CD8-positive, alpha-beta T cell (primary cell): ENCODE measurements at regions of chr1 and their contacts with region 1.

Region 1: DNA sequence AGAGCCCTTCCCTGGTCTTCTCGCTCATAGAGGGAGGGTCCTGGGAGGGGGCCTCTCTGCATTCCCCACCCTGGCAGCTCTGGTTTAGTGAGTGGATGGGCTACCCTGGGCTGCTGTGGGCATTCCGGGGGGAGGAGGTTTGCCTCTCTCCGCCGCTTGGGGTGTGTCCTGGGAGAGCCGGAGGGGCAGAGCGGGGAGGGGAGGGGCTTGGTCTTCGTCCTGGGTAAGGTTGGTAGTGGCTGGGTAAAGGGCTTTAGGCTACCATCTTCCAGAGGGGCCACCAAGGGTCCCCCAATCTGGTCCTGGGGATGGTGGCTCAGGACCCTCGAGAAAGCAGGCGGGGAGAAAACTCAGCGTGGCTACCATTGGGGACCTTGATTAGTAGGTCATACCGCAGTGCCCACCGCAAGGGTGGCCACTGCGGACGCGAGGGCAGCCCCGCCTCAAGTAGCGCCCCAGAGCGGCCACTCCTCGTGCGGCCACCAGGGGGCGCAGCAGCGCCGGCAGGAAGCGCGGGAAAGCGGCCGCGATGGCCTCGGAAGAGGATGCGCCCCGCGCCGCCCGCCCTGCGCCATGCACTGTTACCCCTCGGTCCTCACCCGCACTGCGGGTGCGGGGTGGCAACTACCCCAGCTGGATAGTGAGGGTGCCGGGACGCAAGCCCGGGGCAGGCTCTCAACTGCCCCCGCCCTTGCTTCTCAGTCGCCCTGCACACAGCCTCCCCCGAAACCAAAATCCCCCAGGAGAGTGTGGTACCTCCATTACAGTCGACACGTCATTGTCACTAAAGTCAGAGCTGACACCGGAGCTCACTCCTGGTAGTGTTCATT is 44.1 kb upstream of the SLC25A33 start:
- DNase-seq: peak; percentile 33 to 82 (median 65)
- ATAC-seq: peak; percentile 83
- H3K4me3 ChIP-seq: peak overlapping the region; percentile 39 to 43
- H3K4me3 Mint-ChIP-seq: peak overlapping the region; percentile 67
- H3K27ac ChIP-seq: no peak overlapping the region
- H3K27ac Mint-ChIP-seq: no peak overlapping the region
- H3K4me1 ChIP-seq: peaks cover 8% of the 10 kb centered on the region
- H3K4me1 Mint-ChIP-seq: peaks cover 5% of the 10 kb centered on the region
- H3K27me3 ChIP-seq: no peaks in the 10 kb centered on the region
- H3K27me3 Mint-ChIP-seq: peaks cover 10% of the 10 kb centered on the region
- CTCF ChIP-seq: peak; percentile 93

Region 2: DNA sequence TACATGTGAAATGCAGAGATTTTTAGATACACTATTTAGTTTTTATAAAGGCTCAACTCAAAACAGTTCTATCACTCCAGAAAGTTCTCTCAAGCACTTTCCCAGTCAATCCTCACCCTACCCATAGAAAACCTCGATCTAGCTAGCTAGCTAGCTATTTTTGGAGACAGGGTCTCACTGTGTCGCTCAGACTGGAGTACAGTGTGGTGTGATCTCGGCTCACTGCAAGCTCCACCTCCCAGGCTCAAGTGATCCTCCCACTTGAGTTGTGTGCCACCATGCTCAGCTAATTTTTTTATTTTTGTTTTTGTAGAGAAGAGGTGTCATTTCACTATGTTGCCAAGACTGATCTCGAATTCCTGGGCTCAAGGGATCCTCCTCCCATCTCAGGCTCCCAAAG is 914.6 kb before region 1 on chr1:
- CTCF ChIA-PET with region 1: no interaction called
- POLR2A ChIA-PET with region 1: no interaction called
- intact Hi-C with region 1: no loop called
- DNase-seq: no peak
- ATAC-seq: no peak
- H3K4me3 ChIP-seq: no peak overlapping the region
- H3K4me3 Mint-ChIP-seq: no peak overlapping the region
- H3K27ac ChIP-seq: no peak overlapping the region
- H3K27ac Mint-ChIP-seq: no peak overlapping the region
- H3K4me1 ChIP-seq: no peaks in the 10 kb centered on the region
- H3K4me1 Mint-ChIP-seq: no peaks in the 10 kb centered on the region
- H3K27me3 ChIP-seq: no peaks in the 10 kb centered on the region
- H3K27me3 Mint-ChIP-seq: no peaks in the 10 kb centered on the region
- CTCF ChIP-seq: no peak

Region 3: GRCh38 chr1:9181176-9181906 is 313.8 kb before region 1 on chr1:
- CTCF ChIA-PET with region 1: interaction called, 6 read pairs
- POLR2A ChIA-PET with region 1: no interaction called
- intact Hi-C with region 1: loop called (anchors 1 kb)
- DNase-seq: peak; percentile 40 to 79 (median 64)
- ATAC-seq: peak; percentile 72
- H3K4me3 ChIP-seq: peak overlapping the region in 1 of 2 experiments; percentile 39
- H3K4me3 Mint-ChIP-seq: peak overlapping the region; percentile 69
- H3K27ac ChIP-seq: no peak overlapping the region
- H3K27ac Mint-ChIP-seq: no peak overlapping the region
- H3K4me1 ChIP-seq: peaks cover 9% of the 10 kb centered on the region
- H3K4me1 Mint-ChIP-seq: peaks cover 9% of the 10 kb centered on the region
- H3K27me3 ChIP-seq: peaks cover 0 to 5% of the 10 kb centered on the region in 2 experiments
- H3K27me3 Mint-ChIP-seq: peaks cover 38% of the 10 kb centered on the region
- CTCF ChIP-seq: peak; percentile 91

Region 4: DNA sequence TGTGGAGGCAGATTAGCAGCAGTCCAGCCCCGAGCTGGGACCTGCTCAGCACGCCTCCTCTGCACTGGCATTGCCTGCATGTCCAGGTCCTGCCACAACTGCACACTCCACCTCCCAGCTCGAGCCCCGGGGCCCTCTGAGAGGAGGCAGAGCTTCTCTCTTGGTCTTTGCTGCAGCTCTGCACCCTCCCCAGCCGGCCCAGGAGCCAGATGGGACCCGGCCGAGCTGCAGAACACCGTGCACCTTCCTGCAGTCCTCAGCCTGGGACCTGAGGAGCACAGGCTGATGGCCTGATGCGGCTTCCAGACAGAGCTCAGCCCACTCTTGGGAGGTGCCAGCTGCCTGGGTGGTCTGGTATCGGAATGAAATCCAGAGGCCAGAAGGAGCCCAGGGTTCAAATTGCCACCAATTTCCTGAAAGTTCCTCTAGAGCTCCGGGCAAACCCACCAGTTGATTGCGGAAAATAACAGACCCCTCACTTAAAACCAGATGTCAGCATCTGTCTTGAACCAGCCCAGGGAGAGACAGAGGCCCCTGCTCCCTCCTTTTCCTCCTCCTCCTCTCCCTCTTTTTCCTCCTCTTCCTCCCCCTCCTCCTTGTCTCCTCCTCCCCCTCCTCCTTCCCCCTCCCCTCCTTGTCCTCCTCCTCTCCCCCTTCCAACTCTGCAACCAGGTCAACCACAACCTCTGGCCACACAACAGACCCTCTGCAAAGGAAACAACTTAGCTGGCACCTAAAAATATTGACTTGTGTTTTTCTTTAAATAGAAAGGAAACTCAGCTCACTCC is 213.0 kb before region 1 on chr1:
- CTCF ChIA-PET with region 1: interaction called, 19 read pairs
- POLR2A ChIA-PET with region 1: interaction called, 3 read pairs
- intact Hi-C with region 1: no loop called
- DNase-seq: no peak
- ATAC-seq: no peak
- H3K4me3 ChIP-seq: no peak overlapping the region
- H3K4me3 Mint-ChIP-seq: no peak overlapping the region
- H3K27ac ChIP-seq: no peak overlapping the region
- H3K27ac Mint-ChIP-seq: no peak overlapping the region
- H3K4me1 ChIP-seq: peaks cover 34% of the 10 kb centered on the region
- H3K4me1 Mint-ChIP-seq: peaks cover 45% of the 10 kb centered on the region
- H3K27me3 ChIP-seq: no peaks in the 10 kb centered on the region
- H3K27me3 Mint-ChIP-seq: no peaks in the 10 kb centered on the region
- CTCF ChIP-seq: no peak

Region 5: DNA sequence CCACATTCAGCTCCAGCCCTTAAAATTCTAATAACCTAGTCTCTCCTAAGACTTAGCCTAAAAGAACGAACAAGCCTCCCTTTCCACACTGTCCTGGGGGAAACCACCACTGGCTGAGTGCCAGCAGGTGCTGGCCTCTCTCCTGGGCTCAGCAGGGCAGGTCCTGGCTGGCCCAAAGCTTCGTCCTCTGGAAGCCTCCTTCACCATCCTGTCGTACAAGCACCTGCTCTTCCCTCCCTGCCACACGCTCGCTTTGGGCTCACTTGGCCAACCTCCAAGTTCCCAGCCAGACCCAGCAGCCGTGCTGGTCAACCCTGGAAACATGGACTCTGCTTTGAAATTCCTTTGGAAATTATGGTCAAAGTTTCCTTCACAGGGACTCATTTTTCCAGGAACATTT is 14.1 kb before region 1 on chr1:
- CTCF ChIA-PET with region 1: interaction called, 14 read pairs
- POLR2A ChIA-PET with region 1: no interaction called
- intact Hi-C with region 1: no loop called
- DNase-seq: no peak
- ATAC-seq: no peak
- H3K4me3 ChIP-seq: no peak overlapping the region
- H3K4me3 Mint-ChIP-seq: no peak overlapping the region
- H3K27ac ChIP-seq: no peak overlapping the region
- H3K27ac Mint-ChIP-seq: no peak overlapping the region
- H3K4me1 ChIP-seq: no peaks in the 10 kb centered on the region
- H3K4me1 Mint-ChIP-seq: no peaks in the 10 kb centered on the region
- H3K27me3 ChIP-seq: no peaks in the 10 kb centered on the region
- H3K27me3 Mint-ChIP-seq: peaks cover 9% of the 10 kb centered on the region
- CTCF ChIP-seq: no peak

Region 6: GRCh38 chr1:9558271-9558945 is 63.3 kb after region 1 on chr1:
- CTCF ChIA-PET with region 1: interaction called, 6 read pairs
- POLR2A ChIA-PET with region 1: no interaction called
- intact Hi-C with region 1: loop called in 1 of 2 experiments (anchors 5 kb)
- DNase-seq: peak in 1 of 9 experiments; percentile 38
- ATAC-seq: peak; percentile 26
- H3K4me3 ChIP-seq: no peak overlapping the region
- H3K4me3 Mint-ChIP-seq: peak overlapping the region; percentile 27
- H3K27ac ChIP-seq: peak overlapping the region in 1 of 2 experiments; percentile 13
- H3K27ac Mint-ChIP-seq: peak overlapping the region; percentile 94
- H3K4me1 ChIP-seq: peaks cover 34% of the 10 kb centered on the region
- H3K4me1 Mint-ChIP-seq: peaks cover 38% of the 10 kb centered on the region
- H3K27me3 ChIP-seq: no peaks in the 10 kb centered on the region
- H3K27me3 Mint-ChIP-seq: no peaks in the 10 kb centered on the region
- CTCF ChIP-seq: no peak

Region 7: GRCh38 chr1:9671377-9672140 is 176.4 kb after region 1 on chr1:
- CTCF ChIA-PET with region 1: no interaction called
- POLR2A ChIA-PET with region 1: no interaction called
- intact Hi-C with region 1: no loop called
- DNase-seq: peak in 1 of 9 experiments; percentile 29
- ATAC-seq: peak; percentile 76
- H3K4me3 ChIP-seq: no peak overlapping the region
- H3K4me3 Mint-ChIP-seq: no peak overlapping the region
- H3K27ac ChIP-seq: peak overlapping the region in 1 of 2 experiments; percentile 39
- H3K27ac Mint-ChIP-seq: peak overlapping the region; percentile 87
- H3K4me1 ChIP-seq: peaks cover 82% of the 10 kb centered on the region
- H3K4me1 Mint-ChIP-seq: peaks cover 71% of the 10 kb centered on the region
- H3K27me3 ChIP-seq: no peaks in the 10 kb centered on the region
- H3K27me3 Mint-ChIP-seq: no peaks in the 10 kb centered on the region
- CTCF ChIP-seq: no peak

Region 8: GRCh38 chr1:9867408-9868243 is 372.5 kb after region 1 on chr1:
- CTCF ChIA-PET with region 1: interaction called, 3 read pairs
- POLR2A ChIA-PET with region 1: no interaction called
- intact Hi-C with region 1: loop called (anchors 1 to 2 kb)
- DNase-seq: peak; percentile 76 to 95 (median 88)
- ATAC-seq: peak; percentile 99
- H3K4me3 ChIP-seq: no peak overlapping the region
- H3K4me3 Mint-ChIP-seq: no peak overlapping the region
- H3K27ac ChIP-seq: no peak overlapping the region
- H3K27ac Mint-ChIP-seq: no peak overlapping the region
- H3K4me1 ChIP-seq: no peaks in the 10 kb centered on the region
- H3K4me1 Mint-ChIP-seq: no peaks in the 10 kb centered on the region
- H3K27me3 ChIP-seq: no peaks in the 10 kb centered on the region
- H3K27me3 Mint-ChIP-seq: no peaks in the 10 kb centered on the region
- CTCF ChIP-seq: peak; percentile 91

Region 9: DNA sequence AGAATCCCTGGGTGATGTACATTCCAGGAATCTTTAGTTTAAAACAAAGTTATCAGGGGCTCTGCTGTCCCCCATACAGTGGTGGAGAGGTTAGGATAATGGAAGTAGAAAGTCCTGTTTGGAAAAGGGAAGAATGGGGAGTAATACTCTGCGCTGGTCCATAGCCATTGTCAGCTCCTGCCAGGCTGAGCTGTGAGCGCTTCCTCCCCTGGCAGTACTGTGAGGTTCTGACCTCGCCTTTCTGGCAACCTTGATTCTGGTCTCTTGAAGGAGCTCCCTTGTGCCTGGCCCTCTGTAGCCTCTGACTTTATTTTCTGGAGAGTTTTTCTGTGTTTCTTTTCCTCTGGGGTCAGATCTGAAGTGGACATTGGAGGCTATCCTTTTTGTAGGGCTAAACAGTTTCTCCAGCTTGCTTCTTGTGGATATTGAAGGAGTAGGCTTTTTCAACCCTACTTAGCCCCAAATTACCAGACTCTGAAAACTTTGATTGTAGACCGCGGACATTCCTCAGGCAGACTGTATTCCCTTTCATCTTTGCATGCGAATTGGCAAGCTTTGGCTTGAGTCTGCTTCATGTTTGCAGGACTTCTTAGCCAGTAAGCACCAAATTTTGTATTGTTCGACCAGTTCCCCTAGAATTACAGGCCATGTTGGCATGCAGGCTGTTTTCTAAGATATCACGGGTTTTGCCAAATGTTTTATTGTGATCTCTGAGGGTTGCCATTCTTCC is 551.4 kb after region 1 on chr1:
- CTCF ChIA-PET with region 1: no interaction called
- POLR2A ChIA-PET with region 1: no interaction called
- intact Hi-C with region 1: no loop called
- DNase-seq: no peak
- ATAC-seq: no peak
- H3K4me3 ChIP-seq: no peak overlapping the region
- H3K4me3 Mint-ChIP-seq: no peak overlapping the region
- H3K27ac ChIP-seq: no peak overlapping the region
- H3K27ac Mint-ChIP-seq: no peak overlapping the region
- H3K4me1 ChIP-seq: peaks cover 5% of the 10 kb centered on the region
- H3K4me1 Mint-ChIP-seq: peaks cover 44% of the 10 kb centered on the region
- H3K27me3 ChIP-seq: no peaks in the 10 kb centered on the region
- H3K27me3 Mint-ChIP-seq: no peaks in the 10 kb centered on the region
- CTCF ChIP-seq: no peak